ENCODE measurements at regions of chr9 and their contacts with region 1.

Region 1: DNA sequence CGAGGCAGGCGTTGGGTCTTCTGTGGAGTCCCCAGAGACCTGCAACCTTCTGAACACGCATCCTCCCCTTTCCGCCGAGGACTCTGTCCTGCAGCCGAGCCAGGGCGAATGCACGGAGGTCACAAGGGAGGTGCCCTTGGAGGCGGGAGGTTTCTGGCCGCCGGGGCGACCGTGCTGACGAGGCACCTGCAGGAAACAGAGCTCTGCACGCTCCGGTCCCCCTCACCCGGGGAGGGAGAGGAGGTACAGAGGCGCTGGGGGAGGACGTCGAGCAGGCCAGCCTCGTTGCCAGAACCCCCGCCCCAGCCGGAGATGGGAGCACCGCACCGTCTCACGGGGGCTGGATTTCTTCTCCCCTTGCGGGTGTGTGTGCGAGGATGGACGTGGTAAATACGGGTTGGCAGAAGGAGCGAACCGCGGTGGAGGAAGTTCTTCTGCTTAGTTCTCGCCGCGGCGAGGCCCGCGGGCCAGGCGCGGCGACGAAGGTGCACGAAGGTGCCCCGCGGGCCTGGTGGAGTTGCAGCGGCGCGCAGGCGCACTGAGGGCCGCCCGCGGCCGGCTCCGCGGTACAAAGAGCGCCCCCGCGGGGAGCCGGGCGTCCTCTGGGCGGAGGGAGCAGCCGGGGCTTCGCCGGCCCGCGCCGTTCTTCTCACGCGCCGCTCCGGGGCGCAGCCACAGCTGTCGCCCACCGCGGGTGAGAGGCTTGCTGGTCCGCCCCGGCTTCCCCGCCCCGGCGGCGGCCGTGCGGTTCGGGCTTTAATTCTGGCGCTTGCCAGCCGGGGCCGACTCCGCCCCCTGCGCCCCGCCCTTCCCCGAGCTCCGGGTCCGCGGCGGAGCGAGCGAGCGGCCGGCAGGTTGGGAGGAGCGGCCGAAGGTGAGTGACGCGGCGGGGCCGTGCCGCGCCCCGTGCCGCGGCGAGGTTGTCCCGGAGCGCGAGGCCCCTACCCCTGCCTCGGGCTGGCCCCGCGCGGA is 289.5 kb downstream of the DOCK8 start:
- DNase-seq: peak; percentile 48 to 93 (median 73)
- ATAC-seq: peak; percentile 81
- H3K4me3 ChIP-seq: peak within 1 kb of the TSS; percentile 69
- H3K4me3 Mint-ChIP-seq: peak within 1 kb of the TSS; percentile 86
- H3K27ac ChIP-seq: no peak within 1 kb of the TSS
- H3K27ac Mint-ChIP-seq: peak within 1 kb of the TSS; percentile 51
- H3K4me1 ChIP-seq: peaks cover 22% of the 10 kb centered on the region
- H3K4me1 Mint-ChIP-seq: peaks cover 14% of the 10 kb centered on the region
- H3K27me3 ChIP-seq: peaks cover 0 to 2% of the 10 kb centered on the region in 2 experiments
- H3K27me3 Mint-ChIP-seq: peaks cover 37% of the 10 kb centered on the region
- CTCF ChIP-seq: peak; percentile 41

Region 2: GRCh38 chr9:469672-470551 is 34.3 kb before region 1 on chr9:
- CTCF ChIA-PET with region 1: no interaction called
- POLR2A ChIA-PET with region 1: interaction called, 5 read pairs
- intact Hi-C with region 1: loop called (anchors 2 kb)
- DNase-seq: peak; percentile 78 to 97 (median 92)
- ATAC-seq: peak; percentile 90
- H3K4me3 ChIP-seq: peak overlapping the region; percentile 74
- H3K4me3 Mint-ChIP-seq: peak overlapping the region; percentile 97
- H3K27ac ChIP-seq: peak overlapping the region; percentile 42 to 63
- H3K27ac Mint-ChIP-seq: peak overlapping the region; percentile 93
- H3K4me1 ChIP-seq: peaks cover 19% of the 10 kb centered on the region
- H3K4me1 Mint-ChIP-seq: peaks cover 29% of the 10 kb centered on the region
- H3K27me3 ChIP-seq: no peaks in the 10 kb centered on the region
- H3K27me3 Mint-ChIP-seq: no peaks in the 10 kb centered on the region
- CTCF ChIP-seq: no peak